ENCODE measurements at regions of chr19 and their contacts with region 1.

Region 1: GRCh38 chr19:6362027-6362350 is 658 bp downstream of the CLPP start:
- DNase-seq: peak in 1 of 5 donors; percentile 14
- H3K4me3 ChIP-seq: peak overlapping the region; percentile 92 to 97
- H3K4me3 Mint-ChIP-seq: peak overlapping the region; percentile 90 to 98 (median 95)
- H3K27ac ChIP-seq: peak overlapping the region; percentile 78
- H3K27ac Mint-ChIP-seq: peak overlapping the region; percentile 91 to 97 (median 95)
- H3K4me1 ChIP-seq: peaks cover 23% of the 10 kb centered on the region
- H3K4me1 Mint-ChIP-seq: peaks cover 10 to 29% (median 19%) of the 10 kb centered on the region in 4 donors
- H3K27me3 ChIP-seq: no peaks in the 10 kb centered on the region
- H3K27me3 Mint-ChIP-seq: no peaks in the 10 kb centered on the region

Region 2: DNA sequence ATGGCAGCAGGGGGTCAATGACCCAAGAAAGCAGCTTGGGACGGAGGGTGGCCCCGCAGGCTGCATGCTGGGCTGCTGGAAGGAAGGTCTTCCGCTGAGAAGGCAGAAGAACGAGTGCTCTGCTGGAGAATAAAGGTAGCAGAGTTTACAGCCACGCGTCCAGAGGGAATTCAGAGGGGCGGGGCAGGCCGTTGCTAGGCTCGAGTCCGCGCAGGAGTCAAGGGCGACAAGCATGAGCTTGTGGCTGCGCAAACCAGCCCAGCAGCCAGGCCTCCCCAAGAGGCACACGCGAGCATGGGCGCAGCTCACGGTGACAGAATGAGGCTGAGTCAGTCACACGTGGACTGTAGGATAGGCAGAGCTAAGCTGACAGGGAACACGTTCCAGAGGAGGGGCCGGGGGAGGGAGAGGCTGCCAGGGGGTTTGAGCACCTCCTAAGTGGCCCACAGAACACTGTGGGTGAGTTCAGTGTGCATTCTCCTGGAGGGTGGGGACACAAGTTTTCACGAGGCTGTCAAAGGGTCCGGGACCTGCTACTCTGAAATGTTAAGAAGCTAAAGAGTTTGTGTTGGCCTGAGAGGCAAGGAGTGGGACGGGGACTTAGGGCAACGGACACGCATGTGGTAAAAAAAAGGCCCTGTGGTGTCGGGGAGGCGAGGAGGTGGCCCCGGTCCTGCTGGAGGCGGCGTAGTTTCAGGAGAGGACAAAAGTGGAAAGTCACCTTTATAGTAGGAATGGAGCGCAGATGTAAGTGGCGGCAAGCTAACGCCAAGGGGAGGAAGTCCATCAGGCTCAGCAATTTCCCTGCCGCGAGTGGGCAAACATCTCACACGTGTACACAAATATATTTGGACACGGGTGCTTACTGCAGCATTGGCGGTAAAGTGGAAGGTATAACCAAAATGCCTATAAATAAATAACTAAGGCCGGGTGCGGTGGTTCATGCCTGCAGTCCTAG is 269.4 kb before region 1 on chr19:
- CTCF ChIA-PET with region 1: no interaction called
- POLR2A ChIA-PET with region 1: no interaction called
- intact Hi-C with region 1: no loop called
- DNase-seq: no peak
- H3K4me3 ChIP-seq: no peak overlapping the region
- H3K4me3 Mint-ChIP-seq: no peak overlapping the region
- H3K27ac ChIP-seq: no peak overlapping the region
- H3K27ac Mint-ChIP-seq: peak overlapping the region in 1 of 7 donors; percentile 7
- H3K4me1 ChIP-seq: peaks cover 4% of the 10 kb centered on the region
- H3K4me1 Mint-ChIP-seq: peaks cover 3 to 8% (median 6%) of the 10 kb centered on the region in 4 donors
- H3K27me3 ChIP-seq: no peaks in the 10 kb centered on the region
- H3K27me3 Mint-ChIP-seq: peaks cover 0 to 1% of the 10 kb centered on the region in 2 donors

Region 3: GRCh38 chr19:6110360-6110977 is 251.5 kb before region 1 on chr19 and contains the start of gene RFX2:
- CTCF ChIA-PET with region 1: no interaction called
- POLR2A ChIA-PET with region 1: no interaction called
- intact Hi-C with region 1: loop called (anchors 2 kb)
- DNase-seq: peak; percentile 99 to 100 (median 99)
- H3K4me3 ChIP-seq: peak within 1 kb of the TSS; percentile 52 to 55
- H3K4me3 Mint-ChIP-seq: peak within 1 kb of the TSS; percentile 90 to 97 (median 94)
- H3K27ac ChIP-seq: peak within 1 kb of the TSS; percentile 43
- H3K27ac Mint-ChIP-seq: peak within 1 kb of the TSS; percentile 93 to 97 (median 95)
- H3K4me1 ChIP-seq: peaks cover 27% of the 10 kb centered on the region
- H3K4me1 Mint-ChIP-seq: peaks cover 11 to 26% (median 23%) of the 10 kb centered on the region in 4 donors
- H3K27me3 ChIP-seq: peaks cover 4% of the 10 kb centered on the region
- H3K27me3 Mint-ChIP-seq: peaks cover 2 to 7% of the 10 kb centered on the region in 2 donors
- total RNA-seq, gene RFX2: 5.6 to 6.7 TPM

Region 4: DNA sequence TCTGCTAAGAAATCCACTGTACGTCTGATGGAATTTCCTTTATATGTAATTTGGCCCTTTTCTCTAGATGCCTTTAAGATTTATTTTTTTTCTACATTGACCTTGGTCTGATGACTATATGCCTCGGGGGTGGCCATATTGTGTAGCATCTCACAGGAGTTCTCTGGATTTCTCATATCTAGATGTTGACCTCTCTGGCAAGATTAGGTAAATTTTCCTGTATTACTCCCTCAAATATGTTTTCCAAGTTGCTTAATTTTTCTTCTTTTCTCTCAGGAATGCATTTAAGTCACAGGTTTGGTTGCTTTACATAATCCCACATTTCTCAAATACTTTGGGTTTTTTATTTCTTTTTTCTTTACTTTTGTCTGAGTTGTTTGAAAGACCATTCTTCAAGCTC is 190.4 kb before region 1 on chr19:
- CTCF ChIA-PET with region 1: no interaction called
- POLR2A ChIA-PET with region 1: no interaction called
- intact Hi-C with region 1: no loop called
- DNase-seq: no peak
- H3K4me3 ChIP-seq: no peak overlapping the region
- H3K4me3 Mint-ChIP-seq: no peak overlapping the region
- H3K27ac ChIP-seq: no peak overlapping the region
- H3K27ac Mint-ChIP-seq: no peak overlapping the region
- H3K4me1 ChIP-seq: no peaks in the 10 kb centered on the region
- H3K4me1 Mint-ChIP-seq: no peaks in the 10 kb centered on the region
- H3K27me3 ChIP-seq: no peaks in the 10 kb centered on the region
- H3K27me3 Mint-ChIP-seq: peaks cover 10 to 14% of the 10 kb centered on the region in 2 donors

Region 5: DNA sequence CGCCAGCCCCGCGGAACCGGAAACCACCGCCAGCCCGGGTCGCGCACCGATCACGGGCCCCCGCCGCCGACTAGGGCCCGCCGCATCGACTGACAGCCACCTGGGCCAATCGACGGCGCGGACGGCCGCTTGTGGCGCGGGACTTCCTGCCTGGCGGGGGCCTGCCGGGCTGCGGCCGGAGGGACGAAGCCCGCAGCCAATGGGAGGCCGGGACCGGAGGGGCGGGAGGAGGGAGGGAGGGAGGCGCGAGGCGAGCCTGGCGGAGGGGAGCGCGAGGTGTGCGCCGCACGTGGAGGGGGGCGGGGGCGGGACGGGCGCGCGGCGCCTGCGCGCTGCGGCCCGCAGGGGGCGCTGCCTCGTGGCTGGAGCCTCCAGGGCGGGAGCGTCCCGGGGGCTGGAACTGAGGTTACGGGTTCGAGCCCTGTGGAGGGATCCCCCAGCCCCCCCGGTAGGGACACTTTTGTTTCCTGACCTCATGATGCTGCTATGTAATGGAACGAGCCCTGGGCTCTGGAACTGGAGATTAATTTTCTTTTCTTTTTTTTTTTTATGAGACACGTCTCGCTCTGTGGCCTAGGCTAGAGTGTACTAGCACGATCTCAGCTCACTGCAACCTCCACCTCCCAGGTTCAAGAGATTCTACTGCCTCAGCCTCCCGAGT is 81.9 kb before region 1 on chr19 and contains the start of gene MLLT1:
- CTCF ChIA-PET with region 1: no interaction called
- POLR2A ChIA-PET with region 1: no interaction called
- intact Hi-C with region 1: no loop called
- DNase-seq: peak; percentile 91 to 94 (median 93)
- H3K4me3 ChIP-seq: peak within 1 kb of the TSS; percentile 23 to 57
- H3K4me3 Mint-ChIP-seq: peak within 1 kb of the TSS; percentile 75 to 91 (median 90)
- H3K27ac ChIP-seq: peak within 1 kb of the TSS; percentile 59
- H3K27ac Mint-ChIP-seq: peak within 1 kb of the TSS; percentile 79 to 99 (median 96)
- H3K4me1 ChIP-seq: peaks cover 39% of the 10 kb centered on the region
- H3K4me1 Mint-ChIP-seq: peaks cover 29 to 45% (median 36%) of the 10 kb centered on the region in 4 donors
- H3K27me3 ChIP-seq: no peaks in the 10 kb centered on the region
- H3K27me3 Mint-ChIP-seq: peaks cover 0 to 2% of the 10 kb centered on the region in 2 donors
- total RNA-seq, gene MLLT1: 41.1 to 41.7 TPM

Region 6: DNA sequence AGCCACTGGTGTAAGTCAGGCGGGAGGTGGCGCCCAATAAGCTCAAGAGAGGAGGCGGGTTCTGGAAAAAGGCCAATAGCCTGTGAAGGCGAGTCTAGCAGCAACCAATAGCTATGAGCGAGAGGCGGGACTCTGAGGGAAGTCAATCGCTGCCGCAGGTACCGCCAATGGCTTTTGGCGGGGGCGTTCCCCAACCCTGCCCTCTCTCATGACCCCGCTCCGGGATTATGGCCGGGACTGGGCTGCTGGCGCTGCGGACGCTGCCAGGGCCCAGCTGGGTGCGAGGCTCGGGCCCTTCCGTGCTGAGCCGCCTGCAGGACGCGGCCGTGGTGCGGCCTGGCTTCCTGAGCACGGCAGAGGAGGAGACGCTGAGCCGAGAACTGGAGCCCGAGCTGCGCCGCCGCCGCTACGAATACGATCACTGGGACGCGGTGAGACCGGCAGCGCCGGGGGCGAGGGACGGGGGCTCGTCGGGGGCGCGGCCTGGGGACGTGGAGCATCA is 10.7 kb after region 1 on chr19 and contains the start of gene ALKBH7:
- CTCF ChIA-PET with region 1: interaction called, 6 read pairs
- POLR2A ChIA-PET with region 1: interaction called, 123 read pairs
- intact Hi-C with region 1: loop called (anchors 1 kb)
- DNase-seq: peak; percentile 97 to 99 (median 99)
- H3K4me3 ChIP-seq: peak within 1 kb of the TSS; percentile 66 to 90
- H3K4me3 Mint-ChIP-seq: peak within 1 kb of the TSS; percentile 84 to 95 (median 92)
- H3K27ac ChIP-seq: peak within 1 kb of the TSS; percentile 92
- H3K27ac Mint-ChIP-seq: peak within 1 kb of the TSS; percentile 90 to 97 (median 95)
- H3K4me1 ChIP-seq: peaks cover 15% of the 10 kb centered on the region
- H3K4me1 Mint-ChIP-seq: peaks cover 13 to 30% (median 20%) of the 10 kb centered on the region in 4 donors
- H3K27me3 ChIP-seq: no peaks in the 10 kb centered on the region
- H3K27me3 Mint-ChIP-seq: no peaks in the 10 kb centered on the region
- total RNA-seq, gene ALKBH7: 67.4 to 73.4 TPM

Region 7: DNA sequence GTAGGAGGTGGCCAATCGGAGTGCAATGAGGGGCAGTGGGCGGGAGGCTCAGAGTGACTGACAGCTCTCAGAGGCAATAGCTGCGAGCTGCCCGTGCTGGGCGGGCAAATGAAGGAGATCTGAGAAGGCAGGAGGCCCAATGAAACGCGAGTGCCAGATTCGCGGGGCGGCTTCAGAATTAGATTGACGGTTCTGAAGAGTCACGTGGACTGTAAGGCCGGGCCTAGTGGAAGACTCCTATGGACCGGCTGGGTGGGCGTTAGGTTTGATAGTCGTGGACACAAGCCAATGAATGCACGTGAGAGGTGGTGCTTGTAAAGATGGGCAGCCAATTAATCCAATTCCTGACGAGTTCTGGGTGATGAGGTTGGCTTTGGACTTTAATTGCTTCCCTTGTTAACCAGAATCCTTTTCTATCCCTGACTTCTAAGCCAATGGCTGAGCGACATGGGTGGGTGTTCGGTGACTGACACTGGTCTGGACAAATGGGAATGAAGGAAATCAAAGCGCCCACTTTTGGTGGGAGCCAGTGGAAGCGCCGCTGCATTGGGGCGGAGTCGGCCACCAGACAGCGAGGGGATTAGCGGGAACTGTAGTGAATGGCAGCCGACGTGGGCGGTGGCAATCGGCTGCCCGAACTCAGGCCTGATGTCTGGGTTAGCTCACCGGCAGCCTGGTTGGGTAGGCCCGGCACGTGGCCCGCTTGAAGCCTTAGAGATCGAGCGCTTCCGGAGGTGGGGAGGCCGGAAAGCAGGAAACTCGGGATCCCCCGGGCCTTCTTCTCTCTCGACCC is 63.1 kb after region 1 on chr19:
- CTCF ChIA-PET with region 1: no interaction called
- POLR2A ChIA-PET with region 1: interaction called, 29 read pairs
- intact Hi-C with region 1: loop called (anchors 1 kb)
- DNase-seq: peak; percentile 98 to 100 (median 100)
- H3K4me3 ChIP-seq: peak overlapping the region in 1 of 2 donors; percentile 33
- H3K4me3 Mint-ChIP-seq: peak overlapping the region; percentile 70 to 88 (median 86)
- H3K27ac ChIP-seq: peak overlapping the region; percentile 62
- H3K27ac Mint-ChIP-seq: peak overlapping the region; percentile 81 to 99 (median 94)
- H3K4me1 ChIP-seq: peaks cover 42% of the 10 kb centered on the region
- H3K4me1 Mint-ChIP-seq: peaks cover 16 to 37% (median 29%) of the 10 kb centered on the region in 4 donors
- H3K27me3 ChIP-seq: no peaks in the 10 kb centered on the region
- H3K27me3 Mint-ChIP-seq: no peaks in the 10 kb centered on the region

Region 8: DNA sequence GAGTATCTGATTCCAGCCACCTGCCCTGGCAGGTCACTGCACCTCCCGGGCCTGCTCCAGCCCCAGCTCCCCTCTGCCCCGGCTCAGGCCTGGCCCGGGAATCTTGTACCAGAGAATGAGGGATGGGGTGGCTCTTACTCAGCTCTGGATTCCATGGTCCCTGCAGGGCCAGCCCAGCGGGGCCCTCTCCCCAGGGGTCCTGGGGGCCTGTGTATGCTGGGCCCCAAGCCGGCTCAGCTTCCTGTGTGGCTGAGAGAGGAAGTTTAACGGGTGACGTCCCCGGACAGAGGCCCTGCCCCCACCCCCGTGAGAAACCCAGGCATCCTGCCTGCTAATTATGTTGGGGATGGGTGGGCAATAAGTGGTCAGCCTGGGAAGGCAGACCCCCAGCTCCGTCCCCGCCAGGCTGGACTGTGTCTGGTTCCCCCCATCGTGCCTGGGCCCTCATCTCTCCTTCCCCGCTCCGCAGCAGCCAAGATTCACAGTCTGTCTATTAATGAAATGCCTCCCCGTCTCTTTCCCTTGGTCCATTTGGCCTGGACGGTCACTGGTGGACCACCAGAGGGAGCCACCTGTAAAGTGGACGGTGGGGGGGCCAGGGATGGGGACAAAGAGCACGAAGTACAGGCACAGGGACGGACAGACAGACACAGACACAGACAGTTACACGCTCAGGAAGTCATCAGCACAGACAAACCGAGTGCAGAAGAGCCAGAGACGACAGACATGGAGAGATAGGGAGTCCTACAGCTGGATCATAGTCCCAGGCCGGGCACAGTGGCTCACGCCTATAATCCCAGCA is 119.8 kb after region 1 on chr19 and contains the start of gene DENND1C:
- CTCF ChIA-PET with region 1: no interaction called
- POLR2A ChIA-PET with region 1: interaction called, 10 read pairs
- intact Hi-C with region 1: no loop called
- DNase-seq: peak; percentile 58 to 66 (median 64)
- H3K4me3 ChIP-seq: peak within 1 kb of the TSS; percentile 91 to 97
- H3K4me3 Mint-ChIP-seq: peak within 1 kb of the TSS; percentile 94 to 100 (median 96)
- H3K27ac ChIP-seq: peak within 1 kb of the TSS; percentile 93
- H3K27ac Mint-ChIP-seq: peak within 1 kb of the TSS; percentile 93 to 99 (median 98)
- H3K4me1 ChIP-seq: peaks cover 46% of the 10 kb centered on the region
- H3K4me1 Mint-ChIP-seq: peaks cover 19 to 46% (median 27%) of the 10 kb centered on the region in 4 donors
- H3K27me3 ChIP-seq: no peaks in the 10 kb centered on the region
- H3K27me3 Mint-ChIP-seq: no peaks in the 10 kb centered on the region
- total RNA-seq, gene DENND1C: 105 to 113 TPM

Region 9: DNA sequence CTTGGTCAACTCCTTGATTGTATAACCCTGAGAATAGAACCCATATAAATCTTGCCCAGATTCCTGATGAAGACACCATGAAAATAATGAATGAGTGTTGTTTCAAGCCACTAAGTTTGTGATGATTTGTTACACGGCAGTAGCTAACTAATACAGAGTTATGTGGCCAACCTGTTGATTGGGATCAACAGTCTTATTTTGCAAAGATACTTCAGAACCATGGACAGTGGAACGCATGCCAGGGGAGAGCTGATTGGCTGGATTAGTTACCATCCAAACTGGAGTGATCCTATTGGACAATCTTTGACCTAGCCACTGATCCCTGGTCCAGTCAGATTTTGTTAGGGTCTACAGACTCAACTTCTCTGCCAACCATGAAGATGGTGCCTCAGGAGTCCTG is 202.4 kb after region 1 on chr19:
- CTCF ChIA-PET with region 1: no interaction called
- POLR2A ChIA-PET with region 1: no interaction called
- intact Hi-C with region 1: no loop called
- DNase-seq: no peak
- H3K4me3 ChIP-seq: no peak overlapping the region
- H3K4me3 Mint-ChIP-seq: no peak overlapping the region
- H3K27ac ChIP-seq: no peak overlapping the region
- H3K27ac Mint-ChIP-seq: no peak overlapping the region
- H3K4me1 ChIP-seq: no peaks in the 10 kb centered on the region
- H3K4me1 Mint-ChIP-seq: no peaks in the 10 kb centered on the region
- H3K27me3 ChIP-seq: no peaks in the 10 kb centered on the region
- H3K27me3 Mint-ChIP-seq: peaks cover 2 to 16% of the 10 kb centered on the region in 2 donors

Region 10: GRCh38 chr19:7535035-7535992 is 1173.3 kb after region 1 on chr19 and contains the start of gene PNPLA6:
- CTCF ChIA-PET with region 1: no interaction called
- POLR2A ChIA-PET with region 1: no interaction called
- intact Hi-C with region 1: loop called (anchors 5 kb)
- DNase-seq: peak; percentile 89 to 93 (median 91)
- H3K4me3 ChIP-seq: peak within 1 kb of the TSS; percentile 80 to 93
- H3K4me3 Mint-ChIP-seq: peak within 1 kb of the TSS; percentile 90 to 98 (median 94)
- H3K27ac ChIP-seq: peak within 1 kb of the TSS; percentile 76
- H3K27ac Mint-ChIP-seq: peak within 1 kb of the TSS; percentile 93 to 98 (median 94)
- H3K4me1 ChIP-seq: peaks cover 25% of the 10 kb centered on the region
- H3K4me1 Mint-ChIP-seq: peaks cover 10 to 45% (median 26%) of the 10 kb centered on the region in 4 donors
- H3K27me3 ChIP-seq: no peaks in the 10 kb centered on the region
- H3K27me3 Mint-ChIP-seq: no peaks in the 10 kb centered on the region
- total RNA-seq, gene PNPLA6: 168 to 169 TPM

Measured in CD4-positive, alpha-beta memory T cell (primary cell).